OCI-LY7 (cell line): ENCODE measurements at regions of chr6 and their contacts with region 1.

Region 1: GRCh38 chr6:35202066-35202546 is 11.7 kb upstream of the SCUBE3 start:
- DNase-seq: no peak
- H3K4me3 ChIP-seq: no peak overlapping the region
- H3K27ac ChIP-seq: no peak overlapping the region
- H3K4me1 ChIP-seq: no peaks in the 10 kb centered on the region
- CTCF ChIP-seq: 0 out of 2 replicates have a peak, but pooled peaks have one; percentile 38

Region 2: GRCh38 chr6:35011096-35012041 is 190.7 kb before region 1 on chr6:
- CTCF ChIA-PET with region 1: no interaction called
- POLR2A ChIA-PET with region 1: no interaction called
- intact Hi-C with region 1: no loop called
- DNase-seq: no peak
- H3K4me3 ChIP-seq: no peak overlapping the region
- H3K27ac ChIP-seq: no peak overlapping the region
- H3K4me1 ChIP-seq: no peaks in the 10 kb centered on the region
- CTCF ChIP-seq: no peak

Region 3: DNA sequence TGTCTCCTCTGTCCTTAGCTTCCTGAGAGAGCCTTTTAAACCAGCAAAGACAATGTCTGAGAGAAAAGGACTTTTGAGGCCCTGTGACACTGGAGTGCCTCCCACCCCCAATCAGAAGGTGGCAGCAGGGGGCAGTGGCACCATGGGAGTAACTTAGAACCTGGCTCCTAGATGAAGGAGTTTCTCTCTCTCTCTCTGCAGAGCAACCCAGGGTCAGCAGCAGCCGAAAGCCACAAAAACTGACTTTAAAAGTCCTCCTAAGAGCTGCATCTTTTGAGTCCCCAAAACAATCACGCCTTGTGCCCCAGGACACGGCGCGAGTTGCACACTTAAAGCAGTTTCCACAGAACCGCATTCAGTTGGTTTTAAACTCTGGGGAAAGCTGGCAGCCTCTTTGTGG is 55.7 kb before region 1 on chr6:
- CTCF ChIA-PET with region 1: no interaction called
- POLR2A ChIA-PET with region 1: no interaction called
- intact Hi-C with region 1: loop called (anchors 1 kb)
- DNase-seq: peak; percentile 37
- H3K4me3 ChIP-seq: no peak overlapping the region
- H3K27ac ChIP-seq: no peak overlapping the region
- H3K4me1 ChIP-seq: no peaks in the 10 kb centered on the region
- CTCF ChIP-seq: peak; percentile 77

Region 4: DNA sequence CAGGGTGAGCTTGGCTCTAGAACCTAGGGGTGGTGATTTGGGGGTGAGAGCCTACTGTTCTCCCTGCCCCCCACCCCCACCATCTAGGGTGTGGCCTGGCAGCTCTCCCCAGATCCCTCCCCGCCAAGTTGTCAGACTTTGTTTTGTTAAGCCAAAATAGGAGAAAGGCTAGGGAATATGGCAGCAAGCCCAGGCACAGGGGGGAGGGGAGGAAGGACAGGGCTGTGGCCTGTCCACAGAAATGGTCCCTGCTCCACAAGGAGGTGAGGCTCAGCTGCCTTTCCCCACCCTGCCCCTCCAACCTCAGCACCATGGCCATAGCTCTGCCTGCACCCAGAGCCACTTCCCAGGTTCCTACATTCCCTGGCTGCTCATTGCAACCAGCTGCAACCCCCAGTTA is 28.8 kb after region 1 on chr6:
- CTCF ChIA-PET with region 1: no interaction called
- POLR2A ChIA-PET with region 1: no interaction called
- intact Hi-C with region 1: no loop called
- DNase-seq: no peak
- H3K4me3 ChIP-seq: no peak overlapping the region
- H3K27ac ChIP-seq: no peak overlapping the region
- H3K4me1 ChIP-seq: no peaks in the 10 kb centered on the region
- CTCF ChIP-seq: no peak